CD4-positive, alpha-beta T cell (primary cell): ENCODE measurements at regions of chr18 and their contacts with region 1.

Region 1: GRCh38 chr18:61635901-61636528 is 256.8 kb downstream of the RNF152 start:
- DNase-seq: peak in 11 of 14 experiments; percentile 2 to 53 (median 18)
- ATAC-seq: peak; percentile 41
- H3K4me3 ChIP-seq: no peak overlapping the region
- H3K4me3 Mint-ChIP-seq: no peak overlapping the region
- H3K27ac ChIP-seq: no peak overlapping the region
- H3K27ac Mint-ChIP-seq: no peak overlapping the region
- H3K4me1 ChIP-seq: no peaks in the 10 kb centered on the region
- H3K4me1 Mint-ChIP-seq: no peaks in the 10 kb centered on the region
- H3K27me3 ChIP-seq: peaks cover 0 to 3% of the 10 kb centered on the region in 2 experiments
- H3K27me3 Mint-ChIP-seq: peaks cover 20% of the 10 kb centered on the region
- CTCF ChIP-seq: peak; percentile 39

Region 2: DNA sequence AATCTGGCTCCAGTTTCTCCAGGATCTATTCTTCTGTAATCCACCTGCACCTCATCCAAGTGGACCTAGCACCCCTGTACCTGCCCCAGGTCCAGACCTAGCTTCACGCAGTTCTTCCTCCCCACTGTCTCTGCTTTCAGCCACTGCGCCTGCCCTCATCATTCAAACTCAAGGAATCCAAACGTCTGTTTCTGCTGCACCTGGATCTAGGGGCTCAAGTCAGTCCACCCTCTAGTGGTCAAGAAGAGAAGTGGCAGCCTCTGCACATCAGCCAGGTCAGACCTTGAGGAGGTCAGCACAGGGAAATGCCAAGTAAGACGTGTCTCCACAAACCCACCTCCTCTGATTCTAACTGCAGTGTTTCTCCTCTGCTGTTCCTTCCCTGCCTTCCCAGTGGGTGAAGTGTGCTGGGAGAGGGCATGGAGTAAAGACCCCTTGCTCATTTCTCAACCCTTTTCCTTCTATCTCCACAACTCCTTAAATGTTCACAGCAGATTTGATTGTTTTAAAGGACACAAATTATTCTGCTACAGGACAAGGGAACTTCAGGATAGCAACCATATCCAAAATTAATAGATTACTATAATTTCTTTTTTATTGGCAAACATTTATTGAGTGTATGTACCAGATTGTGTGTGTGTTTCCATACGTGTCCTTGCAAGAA is 265.4 kb after region 1 on chr18:
- CTCF ChIA-PET with region 1: no interaction called
- POLR2A ChIA-PET with region 1: no interaction called
- intact Hi-C with region 1: loop called in 1 of 2 experiments (anchors 5 kb)
- DNase-seq: peak in 12 of 14 experiments; percentile 2 to 66 (median 24)
- ATAC-seq: peak; percentile 74
- H3K4me3 ChIP-seq: no peak overlapping the region
- H3K4me3 Mint-ChIP-seq: no peak overlapping the region
- H3K27ac ChIP-seq: no peak overlapping the region
- H3K27ac Mint-ChIP-seq: no peak overlapping the region
- H3K4me1 ChIP-seq: no peaks in the 10 kb centered on the region
- H3K4me1 Mint-ChIP-seq: no peaks in the 10 kb centered on the region
- H3K27me3 ChIP-seq: peaks cover 7 to 9% of the 10 kb centered on the region in 2 experiments
- H3K27me3 Mint-ChIP-seq: peaks cover 51% of the 10 kb centered on the region
- CTCF ChIP-seq: peak; percentile 84